ENCODE measurements at regions of chr1 and their contacts with region 1.

Region 1: GRCh38 chr1:150813058-150813707 is 5.1 kb upstream of the CTSK start:
- DNase-seq: no peak
- H3K4me3 ChIP-seq: no peak overlapping the region
- H3K27ac ChIP-seq: no peak overlapping the region
- H3K4me1 ChIP-seq: peaks cover 0 to 14% (median 11%) of the 10 kb centered on the region in 4 donors
- H3K27me3 ChIP-seq: no peaks in the 10 kb centered on the region
- CTCF ChIP-seq: peak; percentile 45 to 64 (median 58)
- EP300 ChIP-seq: no peak
- POLR2A ChIP-seq: no peak

Region 2: GRCh38 chr1:150552093-150552691 is 261.0 kb before region 1 on chr1:
- intact Hi-C with region 1: loop called (anchors 10 kb)
- DNase-seq: peak; percentile 98
- H3K4me3 ChIP-seq: peak overlapping the region in 3 of 4 donors; percentile 5 to 34 (median 6)
- H3K27ac ChIP-seq: peak overlapping the region; percentile 91 to 96 (median 94)
- H3K4me1 ChIP-seq: peaks cover 30 to 89% (median 66%) of the 10 kb centered on the region in 4 donors
- H3K27me3 ChIP-seq: no peaks in the 10 kb centered on the region
- CTCF ChIP-seq: no peak
- EP300 ChIP-seq: peak; percentile 70
- POLR2A ChIP-seq: no peak